ENCODE measurements at regions of chr6 and their contacts with region 1.

Region 1: DNA sequence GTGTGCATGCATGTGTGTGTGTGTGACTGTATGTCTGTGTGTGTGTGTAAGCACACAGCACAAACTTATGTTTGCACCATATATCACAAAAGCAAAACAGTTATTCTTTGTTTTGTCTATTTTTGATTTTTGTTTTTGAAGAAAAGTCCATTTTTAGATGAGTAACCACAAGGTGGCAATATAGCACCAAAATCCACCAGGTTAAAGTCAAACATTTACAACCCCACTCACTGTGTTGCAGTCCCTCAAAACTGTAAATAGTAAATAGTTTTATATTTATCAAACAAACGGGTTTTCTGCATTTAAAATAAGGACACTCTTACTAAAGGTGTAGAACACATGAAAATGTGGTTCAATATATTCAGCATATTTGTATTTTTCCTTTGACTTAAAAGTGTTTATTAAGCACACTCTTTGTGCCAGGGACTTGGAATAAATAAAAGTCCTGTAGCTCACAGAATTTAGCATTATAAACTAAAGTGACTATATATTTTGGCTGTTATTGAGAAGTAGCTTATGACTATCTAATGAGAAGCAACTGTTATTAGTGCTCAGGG is 118.5 kb downstream of the GFRAL start:
- DNase-seq: peak; percentile 50
- H3K4me3 Mint-ChIP-seq: no peak overlapping the region
- H3K27ac Mint-ChIP-seq: no peak overlapping the region
- H3K4me1 Mint-ChIP-seq: peaks cover 9% of the 10 kb centered on the region
- H3K27me3 Mint-ChIP-seq: no peaks in the 10 kb centered on the region
- CTCF ChIP-seq: peak; percentile 68

Region 2: GRCh38 chr6:55276745-55277530 is 168.8 kb before region 1 on chr6:
- CTCF ChIA-PET with region 1: interaction called, 27 read pairs
- POLR2A ChIA-PET with region 1: no interaction called
- intact Hi-C with region 1: loop called (anchors 1 kb)
- DNase-seq: peak; percentile 72
- H3K4me3 Mint-ChIP-seq: no peak overlapping the region
- H3K27ac Mint-ChIP-seq: no peak overlapping the region
- H3K4me1 Mint-ChIP-seq: no peaks in the 10 kb centered on the region
- H3K27me3 Mint-ChIP-seq: no peaks in the 10 kb centered on the region
- CTCF ChIP-seq: peak; percentile 64

Region 3: GRCh38 chr6:55299286-55299985 is 146.3 kb before region 1 on chr6:
- CTCF ChIA-PET with region 1: no interaction called
- POLR2A ChIA-PET with region 1: no interaction called
- intact Hi-C with region 1: loop called (anchors 5 kb)
- DNase-seq: no peak
- H3K4me3 Mint-ChIP-seq: no peak overlapping the region
- H3K27ac Mint-ChIP-seq: no peak overlapping the region
- H3K4me1 Mint-ChIP-seq: no peaks in the 10 kb centered on the region
- H3K27me3 Mint-ChIP-seq: no peaks in the 10 kb centered on the region
- CTCF ChIP-seq: no peak

Region 4: GRCh38 chr6:55617272-55617671 is 171.5 kb after region 1 on chr6:
- CTCF ChIA-PET with region 1: interaction called, 8 read pairs
- POLR2A ChIA-PET with region 1: no interaction called
- intact Hi-C with region 1: loop called (anchors 1 kb)
- DNase-seq: peak; percentile 70
- H3K4me3 Mint-ChIP-seq: no peak overlapping the region
- H3K27ac Mint-ChIP-seq: no peak overlapping the region
- H3K4me1 Mint-ChIP-seq: peaks cover 4% of the 10 kb centered on the region
- H3K27me3 Mint-ChIP-seq: no peaks in the 10 kb centered on the region
- CTCF ChIP-seq: peak; percentile 43

Region 5: GRCh38 chr6:55636405-55637102 is 190.8 kb after region 1 on chr6:
- CTCF ChIA-PET with region 1: interaction called, 4 read pairs
- POLR2A ChIA-PET with region 1: no interaction called
- intact Hi-C with region 1: loop called (anchors 5 kb)
- DNase-seq: peak; percentile 78
- H3K4me3 Mint-ChIP-seq: no peak overlapping the region
- H3K27ac Mint-ChIP-seq: peak overlapping the region; percentile 33
- H3K4me1 Mint-ChIP-seq: peaks cover 20% of the 10 kb centered on the region
- H3K27me3 Mint-ChIP-seq: no peaks in the 10 kb centered on the region
- CTCF ChIP-seq: no peak

Region 6: DNA sequence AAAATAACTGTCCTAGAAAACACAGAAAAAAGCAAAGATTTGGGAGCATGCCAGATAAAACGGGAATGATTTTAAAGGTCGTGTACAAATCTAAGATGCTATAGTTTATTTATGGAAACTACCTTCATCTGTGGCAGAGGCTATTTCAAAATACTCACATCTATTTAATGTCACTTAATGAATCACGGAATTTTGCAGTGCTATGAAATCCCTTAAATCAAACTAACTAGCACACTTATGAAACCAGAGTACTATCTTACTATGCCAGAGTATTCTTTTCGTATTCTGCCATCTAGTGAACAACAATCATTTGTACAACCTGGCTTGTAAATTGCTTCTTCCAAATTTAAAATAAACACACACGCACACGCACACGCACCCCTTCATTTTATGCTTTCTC is 507.6 kb after region 1 on chr6:
- CTCF ChIA-PET with region 1: interaction called, 134 read pairs
- POLR2A ChIA-PET with region 1: interaction called, 9 read pairs
- intact Hi-C with region 1: loop called (anchors 1 kb)
- DNase-seq: peak; percentile 61
- H3K4me3 Mint-ChIP-seq: peak overlapping the region; percentile 38
- H3K27ac Mint-ChIP-seq: no peak overlapping the region
- H3K4me1 Mint-ChIP-seq: no peaks in the 10 kb centered on the region
- H3K27me3 Mint-ChIP-seq: no peaks in the 10 kb centered on the region
- CTCF ChIP-seq: peak; percentile 47

Measured in MCF 10A (cell line).